ENCODE measurements at regions of chr10 and their contacts with region 1.

Region 1: DNA sequence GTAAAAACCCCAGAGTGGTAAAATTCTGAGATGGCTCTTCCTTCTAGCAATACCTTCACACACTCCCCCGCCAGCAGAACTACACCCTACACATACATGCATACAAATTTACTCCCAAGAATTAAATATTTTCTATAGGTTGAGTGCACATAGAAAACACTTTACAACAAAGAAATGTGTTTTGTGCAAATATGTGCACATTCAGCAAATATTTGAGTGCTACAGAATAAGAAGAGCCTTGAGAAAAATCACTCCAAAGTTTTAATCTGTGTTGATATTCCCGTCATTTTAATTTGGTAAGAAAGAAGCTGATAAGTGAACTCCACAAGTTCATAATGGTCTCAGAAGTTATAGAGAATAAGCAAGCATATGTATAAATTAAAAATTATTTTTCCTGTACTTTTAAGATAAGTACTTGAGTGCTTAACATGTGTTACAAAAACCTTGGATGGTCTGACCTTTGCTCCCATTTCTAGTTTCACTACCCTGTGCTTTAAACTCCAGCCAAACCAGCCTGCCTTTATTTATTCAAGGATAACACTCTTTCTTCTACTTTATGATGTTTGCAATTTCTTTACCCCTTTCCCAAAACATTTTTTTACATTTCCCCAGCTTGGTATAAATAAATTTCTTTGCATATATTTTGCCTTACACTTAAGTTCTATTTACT is 733.5 kb upstream of the LRRTM3 start:
- DNase-seq: no peak
- H3K4me3 ChIP-seq: no peak overlapping the region
- H3K27ac ChIP-seq: no peak overlapping the region
- H3K4me1 ChIP-seq: no peaks in the 10 kb centered on the region
- H3K27me3 ChIP-seq: no peaks in the 10 kb centered on the region
- CTCF ChIP-seq: no peak
- POLR2A ChIP-seq: no peak

Region 2: DNA sequence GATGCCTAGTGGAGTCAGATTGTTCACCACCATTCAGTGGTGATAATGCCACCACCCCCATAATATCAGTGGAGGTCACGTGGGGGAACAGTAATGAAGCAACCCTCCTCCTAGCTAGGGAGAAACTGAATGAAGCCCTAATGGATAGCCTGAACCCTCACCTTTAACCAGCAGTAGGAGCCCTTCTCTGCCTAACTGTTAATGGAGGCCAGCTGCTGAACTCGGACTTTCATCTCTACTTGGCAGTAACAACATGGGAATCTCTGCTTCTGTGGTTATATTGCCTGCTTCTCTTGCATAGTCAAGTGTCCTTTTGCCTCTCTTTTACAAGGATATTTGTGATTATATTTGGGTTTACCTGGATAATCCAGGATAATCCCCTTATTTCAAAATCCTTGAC is 1573.2 kb before region 1 on chr10:
- intact Hi-C with region 1: loop called (anchors 5 kb)
- DNase-seq: no peak
- H3K4me3 ChIP-seq: no peak overlapping the region
- H3K27ac ChIP-seq: no peak overlapping the region
- H3K4me1 ChIP-seq: no peaks in the 10 kb centered on the region
- H3K27me3 ChIP-seq: no peaks in the 10 kb centered on the region
- CTCF ChIP-seq: no peak
- POLR2A ChIP-seq: no peak

Region 3: DNA sequence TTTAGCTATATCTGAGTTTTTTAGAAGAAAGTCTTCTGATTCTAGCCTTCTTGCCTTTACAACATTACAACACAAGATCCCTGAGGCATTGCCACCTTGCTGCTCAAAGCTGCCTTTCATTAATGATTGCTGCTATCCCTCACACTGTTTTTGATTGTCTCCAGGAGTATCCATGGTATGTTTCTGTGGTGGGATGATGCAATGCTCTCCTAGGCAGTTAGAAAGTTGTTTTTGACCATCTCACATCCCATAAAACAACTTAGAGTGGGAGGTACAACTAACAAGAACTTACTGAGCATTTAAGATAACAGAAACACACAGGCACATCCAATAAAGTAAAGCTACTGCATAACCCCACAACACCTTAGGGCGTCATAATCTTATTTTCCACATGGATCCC is 422.5 kb before region 1 on chr10:
- intact Hi-C with region 1: no loop called
- DNase-seq: no peak
- H3K4me3 ChIP-seq: no peak overlapping the region
- H3K27ac ChIP-seq: no peak overlapping the region
- H3K4me1 ChIP-seq: no peaks in the 10 kb centered on the region
- H3K27me3 ChIP-seq: no peaks in the 10 kb centered on the region
- CTCF ChIP-seq: no peak
- POLR2A ChIP-seq: no peak

Region 4: GRCh38 chr10:65827359-65827758 is 364.9 kb before region 1 on chr10:
- intact Hi-C with region 1: no loop called
- DNase-seq: no peak
- H3K4me3 ChIP-seq: no peak overlapping the region
- H3K27ac ChIP-seq: no peak overlapping the region
- H3K4me1 ChIP-seq: no peaks in the 10 kb centered on the region
- H3K27me3 ChIP-seq: no peaks in the 10 kb centered on the region
- CTCF ChIP-seq: no peak
- POLR2A ChIP-seq: no peak

Region 5: GRCh38 chr10:66550351-66550750 is 358.1 kb after region 1 on chr10:
- intact Hi-C with region 1: no loop called
- DNase-seq: no peak
- H3K4me3 ChIP-seq: no peak overlapping the region
- H3K27ac ChIP-seq: no peak overlapping the region
- H3K4me1 ChIP-seq: no peaks in the 10 kb centered on the region
- H3K27me3 ChIP-seq: no peaks in the 10 kb centered on the region
- CTCF ChIP-seq: no peak
- POLR2A ChIP-seq: no peak

Measured in vagina (tissue), 2 donors.